ENCODE measurements at regions of chr12 and their contacts with region 1.

Region 1: DNA sequence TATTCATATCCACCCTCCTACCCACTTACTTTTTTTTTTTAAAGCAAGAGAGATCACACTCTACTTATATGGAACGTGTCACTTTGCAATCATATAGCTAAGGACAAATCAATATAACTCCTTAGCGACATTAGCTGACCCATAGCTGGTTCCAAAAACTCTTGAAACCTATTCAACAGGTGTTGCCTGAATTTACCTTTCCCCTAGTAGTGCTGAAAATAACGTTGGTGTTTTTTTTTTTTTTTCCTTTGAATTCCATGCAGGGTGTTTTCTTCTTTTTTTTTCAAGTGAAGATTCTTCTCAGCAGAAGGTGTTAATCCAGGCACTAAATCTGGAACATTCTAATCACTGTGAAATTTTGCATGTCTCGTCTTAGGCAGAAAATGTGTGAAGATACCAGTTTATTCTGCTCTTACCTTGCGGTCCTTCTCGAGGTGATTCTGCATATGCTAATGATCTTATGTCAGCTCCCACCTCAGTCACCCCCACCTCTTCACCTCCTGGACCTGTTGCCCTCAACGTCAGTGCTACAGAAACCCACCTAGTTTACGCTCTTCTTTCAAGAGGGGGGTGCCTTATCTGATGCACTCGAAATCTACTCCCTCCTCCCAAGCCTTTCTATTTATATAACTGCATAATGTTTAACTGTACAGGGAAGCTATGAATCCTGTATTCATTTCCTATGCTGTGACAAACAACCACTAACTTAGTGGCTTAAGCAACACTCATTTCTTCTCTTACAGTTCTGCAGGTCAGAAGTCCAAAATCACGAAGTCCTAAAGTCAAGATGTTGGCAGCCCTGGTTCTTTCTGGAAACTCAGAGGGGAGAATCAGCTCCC is 7.1 kb upstream of the VPS37B start:
- DNase-seq: no peak
- ATAC-seq: no peak
- H3K4me3 Mint-ChIP-seq: no peak overlapping the region
- H3K27ac Mint-ChIP-seq: peak overlapping the region; percentile 0
- H3K4me1 Mint-ChIP-seq: peaks cover 35% of the 10 kb centered on the region
- H3K27me3 Mint-ChIP-seq: no peaks in the 10 kb centered on the region

Region 2: GRCh38 chr12:122888232-122888867 is 14.7 kb before region 1 on chr12:
- POLR2A ChIA-PET with region 1: interaction called, 14 read pairs
- DNase-seq: no peak
- ATAC-seq: peak; percentile 75
- H3K4me3 Mint-ChIP-seq: peak overlapping the region; percentile 88
- H3K27ac Mint-ChIP-seq: peak overlapping the region; percentile 97
- H3K4me1 Mint-ChIP-seq: peaks cover 69% of the 10 kb centered on the region
- H3K27me3 Mint-ChIP-seq: no peaks in the 10 kb centered on the region